Activated T-helper 2 cell treated with anti-CD3 and anti-CD28 coated beads, Interferon-gamma antibody, Interleukin-2, Interleukin-4, amounts not matched to agents 10 μg/mL and 5 μg/mL and 100 μg/mL, durations not matched to agents 14 hours and 24 hours and 36 hours (primary cell): ENCODE measurements at regions of chr1 and their contacts with region 1.

Region 1: DNA sequence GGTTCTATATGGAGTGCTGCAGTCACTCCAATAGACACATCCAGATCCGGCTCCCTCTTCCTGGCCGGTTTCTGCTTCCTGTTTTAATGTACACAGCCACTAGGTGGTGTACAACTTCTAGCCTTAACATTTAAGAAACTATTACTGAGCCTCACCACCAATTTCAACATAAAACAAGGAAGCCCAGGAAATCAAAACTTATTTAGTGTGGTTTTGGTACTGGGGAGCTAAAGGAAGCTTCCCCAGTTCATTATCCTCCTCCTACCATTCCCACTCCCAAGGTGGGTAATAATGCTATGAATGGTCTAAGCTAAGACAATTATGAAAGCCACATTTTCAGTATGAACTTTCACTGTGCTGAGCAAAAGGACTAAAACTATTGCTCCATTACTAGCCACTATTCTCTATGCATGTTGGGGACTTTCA is 25.5 kb upstream of the MTMR11 start:
- DNase-seq: peak; percentile 30
- H3K4me3 Mint-ChIP-seq: no peak overlapping the region
- H3K27ac Mint-ChIP-seq: no peak overlapping the region
- H3K4me1 Mint-ChIP-seq: peaks cover 19% of the 10 kb centered on the region
- H3K27me3 Mint-ChIP-seq: no peaks in the 10 kb centered on the region

Region 2: GRCh38 chr1:150049926-150050325 is 87.8 kb after region 1 on chr1:
- intact Hi-C with region 1: loop called (anchors 1 kb)
- DNase-seq: no peak
- H3K4me3 Mint-ChIP-seq: no peak overlapping the region
- H3K27ac Mint-ChIP-seq: no peak overlapping the region
- H3K4me1 Mint-ChIP-seq: peaks cover 3% of the 10 kb centered on the region
- H3K27me3 Mint-ChIP-seq: peaks cover 16% of the 10 kb centered on the region

Region 3: GRCh38 chr1:150168960-150169601 is 206.9 kb after region 1 on chr1:
- intact Hi-C with region 1: loop called (anchors 5 kb)
- DNase-seq: peak; percentile 31
- H3K4me3 Mint-ChIP-seq: no peak overlapping the region
- H3K27ac Mint-ChIP-seq: no peak overlapping the region
- H3K4me1 Mint-ChIP-seq: peaks cover 13% of the 10 kb centered on the region
- H3K27me3 Mint-ChIP-seq: peaks cover 10% of the 10 kb centered on the region

Region 4: GRCh38 chr1:150186789-150187559 is 224.8 kb after region 1 on chr1:
- intact Hi-C with region 1: loop called (anchors 5 kb)
- DNase-seq: no peak
- H3K4me3 Mint-ChIP-seq: no peak overlapping the region
- H3K27ac Mint-ChIP-seq: no peak overlapping the region
- H3K4me1 Mint-ChIP-seq: peaks cover 8% of the 10 kb centered on the region
- H3K27me3 Mint-ChIP-seq: peaks cover 1% of the 10 kb centered on the region